CD8-positive, alpha-beta memory T cell (primary cell): ENCODE measurements at regions of chr3 and their contacts with region 1.

Region 1: DNA sequence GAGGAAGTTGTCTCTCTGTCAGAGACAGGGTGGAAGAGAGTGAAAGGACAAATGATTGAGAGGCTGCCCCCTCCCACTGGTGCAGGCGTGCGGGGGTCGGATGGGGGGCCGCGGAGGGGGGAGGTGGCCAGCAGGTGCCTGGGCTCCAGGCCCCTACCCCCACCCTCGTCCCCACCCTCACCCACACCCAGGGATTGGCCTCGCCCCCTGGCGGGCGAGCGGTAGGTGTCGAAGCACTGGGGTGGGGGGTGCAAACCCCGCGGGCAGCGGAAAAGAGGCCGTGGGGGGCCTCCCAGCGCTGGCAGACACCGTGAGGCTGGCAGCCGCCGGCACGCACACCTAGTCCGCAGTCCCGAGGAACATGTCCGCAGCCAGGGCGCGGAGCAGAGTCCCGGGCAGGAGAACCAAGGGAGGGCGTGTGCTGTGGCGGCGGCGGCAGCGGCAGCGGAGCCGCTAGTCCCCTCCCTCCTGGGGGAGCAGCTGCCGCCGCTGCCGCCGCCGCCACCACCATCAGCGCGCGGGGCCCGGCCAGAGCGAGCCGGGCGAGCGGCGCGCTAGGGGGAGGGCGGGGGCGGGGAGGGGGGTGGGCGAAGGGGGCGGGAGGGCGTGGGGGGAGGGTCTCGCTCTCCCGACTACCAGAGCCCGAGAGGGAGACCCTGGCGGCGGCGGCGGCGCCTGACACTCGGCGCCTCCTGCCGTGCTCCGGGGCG is at the start of gene KAT2B:
- DNase-seq: peak; percentile 76 to 90 (median 83)
- H3K4me3 ChIP-seq: peak within 1 kb of the TSS; percentile 98
- H3K4me3 Mint-ChIP-seq: peak within 1 kb of the TSS; percentile 95 to 100 (median 99)
- H3K27ac ChIP-seq: peak within 1 kb of the TSS; percentile 88
- H3K27ac Mint-ChIP-seq: peak within 1 kb of the TSS; percentile 92 to 99 (median 96)
- H3K4me1 ChIP-seq: peaks cover 49% of the 10 kb centered on the region
- H3K4me1 Mint-ChIP-seq: peaks cover 43 to 54% (median 53%) of the 10 kb centered on the region in 3 donors
- H3K27me3 ChIP-seq: no peaks in the 10 kb centered on the region
- H3K27me3 Mint-ChIP-seq: no peaks in the 10 kb centered on the region
- total RNA-seq, gene KAT2B: 48.7 to 48.8 TPM

Region 2: DNA sequence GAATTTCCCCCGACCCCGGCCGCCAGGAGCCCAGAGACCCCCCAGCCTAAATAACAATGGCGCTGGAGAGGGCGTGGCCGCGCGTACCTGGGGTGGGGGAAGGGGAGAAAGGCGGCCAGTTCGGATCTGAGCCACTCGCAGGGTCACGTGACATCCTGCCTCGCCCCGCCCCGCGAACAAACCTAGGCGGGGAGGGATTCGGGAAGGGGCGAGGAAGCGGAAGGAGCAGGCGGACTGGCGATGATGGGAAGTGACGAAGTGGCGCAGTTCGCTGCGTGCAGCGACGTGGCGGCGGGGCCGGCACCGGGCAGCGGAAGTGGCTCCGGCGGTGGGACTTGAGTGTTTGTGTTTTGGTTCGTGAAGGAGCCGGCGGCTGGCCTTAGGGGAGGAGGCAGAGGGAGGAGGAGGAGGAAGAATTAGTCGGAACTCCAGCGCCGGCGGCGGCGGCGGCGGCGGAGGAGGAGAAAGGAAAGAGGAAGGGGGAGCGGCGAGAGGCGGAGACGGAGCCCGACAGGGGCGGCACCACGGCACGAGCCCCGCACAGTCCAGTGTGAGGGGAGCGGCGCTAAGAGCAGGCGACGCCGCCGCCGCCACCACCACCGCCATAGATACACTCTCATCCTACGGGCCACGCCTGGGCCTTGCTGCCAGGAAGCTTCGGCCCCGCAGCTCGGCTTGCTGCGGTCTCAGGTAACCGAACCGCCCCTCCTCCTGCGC is 92.9 kb before region 1 on chr3 and contains the start of gene RAB5A:
- CTCF ChIA-PET with region 1: interaction called, 5 read pairs
- POLR2A ChIA-PET with region 1: interaction called, 15 read pairs
- DNase-seq: peak; percentile 93 to 97 (median 97)
- H3K4me3 ChIP-seq: peak within 1 kb of the TSS; percentile 74
- H3K4me3 Mint-ChIP-seq: peak within 1 kb of the TSS; percentile 93 to 100 (median 98)
- H3K27ac ChIP-seq: peak within 1 kb of the TSS; percentile 98
- H3K27ac Mint-ChIP-seq: peak within 1 kb of the TSS; percentile 91 to 100 (median 98)
- H3K4me1 ChIP-seq: peaks cover 35% of the 10 kb centered on the region
- H3K4me1 Mint-ChIP-seq: peaks cover 48 to 67% (median 67%) of the 10 kb centered on the region in 3 donors
- H3K27me3 ChIP-seq: no peaks in the 10 kb centered on the region
- H3K27me3 Mint-ChIP-seq: no peaks in the 10 kb centered on the region
- total RNA-seq, gene RAB5A: 68.6 to 75.3 TPM

Region 3: DNA sequence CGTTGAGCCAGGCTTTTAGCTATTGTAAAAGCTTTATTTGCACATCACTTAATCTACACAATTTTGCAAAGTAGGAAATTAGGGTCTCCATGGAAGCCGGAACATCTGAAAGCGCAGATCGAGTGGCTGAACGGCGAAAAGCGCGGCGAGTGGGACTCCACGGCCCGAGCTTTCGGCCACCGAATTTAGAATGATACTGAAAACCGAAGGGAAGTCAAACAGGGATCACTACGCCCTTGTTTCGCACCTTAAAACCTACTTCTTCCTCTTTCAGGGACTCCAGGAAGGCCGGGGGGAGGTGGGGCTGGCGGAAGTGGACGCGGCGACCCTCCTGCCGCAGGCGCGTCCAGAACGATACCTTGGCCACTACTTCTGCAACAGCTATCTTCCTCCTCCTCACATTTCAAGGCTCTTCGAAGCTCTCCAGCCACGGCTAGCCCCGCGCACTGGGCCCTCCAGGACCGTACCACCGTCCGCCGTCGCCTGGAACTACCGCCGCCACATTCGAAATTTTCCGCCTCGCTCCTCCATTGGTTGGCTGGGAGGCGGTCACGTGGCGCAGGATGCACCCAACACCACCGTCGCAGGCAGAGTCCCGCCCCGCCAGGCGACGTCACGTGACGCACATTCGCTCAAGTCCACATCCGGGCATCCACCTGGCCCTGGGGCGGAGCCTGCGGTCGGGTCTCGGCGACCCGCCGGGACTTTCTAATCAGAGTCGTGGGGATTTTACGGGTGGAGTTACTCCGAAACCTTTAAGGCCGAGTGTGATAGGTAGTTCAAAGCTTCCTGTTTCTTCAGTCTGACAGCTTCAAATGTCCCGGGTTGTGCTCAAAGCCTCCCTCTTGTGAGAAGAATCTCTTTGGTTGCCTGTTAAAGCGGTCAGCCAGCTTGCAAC is 146.0 kb after region 1 on chr3 and contains the start of gene SGO1:
- CTCF ChIA-PET with region 1: interaction called, 11 read pairs
- POLR2A ChIA-PET with region 1: interaction called, 10 read pairs
- DNase-seq: peak; percentile 99 to 100 (median 99)
- H3K4me3 ChIP-seq: peak within 1 kb of the TSS; percentile 94
- H3K4me3 Mint-ChIP-seq: no peak within 1 kb of the TSS
- H3K27ac ChIP-seq: peak within 1 kb of the TSS; percentile 93
- H3K27ac Mint-ChIP-seq: no peak within 1 kb of the TSS
- H3K4me1 ChIP-seq: peaks cover 22% of the 10 kb centered on the region
- H3K4me1 Mint-ChIP-seq: peaks cover 0 to 7% (median 0%) of the 10 kb centered on the region in 3 donors
- H3K27me3 ChIP-seq: no peaks in the 10 kb centered on the region
- H3K27me3 Mint-ChIP-seq: no peaks in the 10 kb centered on the region
- total RNA-seq, gene SGO1: 15.6 to 19.4 TPM